WTC11 (cell line): ENCODE measurements at regions of chr16 and their contacts with region 1.

Region 1: DNA sequence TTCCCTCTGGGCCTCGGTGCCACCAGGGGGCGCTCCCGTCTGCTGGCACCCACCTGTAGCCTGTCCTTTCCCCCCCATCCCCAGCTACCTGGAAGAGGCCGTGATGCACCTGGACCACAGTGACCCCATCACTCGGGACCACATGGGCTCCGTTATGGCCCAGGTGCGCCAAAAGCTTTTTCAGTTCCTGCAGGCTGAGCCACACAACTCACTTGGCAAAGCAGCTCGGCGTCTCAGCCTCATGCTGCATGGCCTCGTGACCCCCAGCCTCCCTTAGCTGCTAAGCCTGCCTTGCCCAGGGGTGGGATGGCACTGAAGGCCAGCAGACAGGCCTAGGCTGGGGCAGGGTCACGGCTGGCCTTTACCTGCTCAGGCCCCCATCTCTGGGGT is 818 bp upstream of the NRN1L start:
- DNase-seq: peak; percentile 88
- ATAC-seq: peak; percentile 60
- H3K4me3 Mint-ChIP-seq: no peak overlapping the region
- H3K27ac Mint-ChIP-seq: no peak overlapping the region
- H3K4me1 Mint-ChIP-seq: peaks cover 23% of the 10 kb centered on the region
- H3K27me3 Mint-ChIP-seq: no peaks in the 10 kb centered on the region
- CTCF ChIP-seq: peak; percentile 90

Region 2: GRCh38 chr16:67806428-67807147 is 77.3 kb before region 1 on chr16 and contains the starts of genes RANBP10 and TSNAXIP1:
- CTCF ChIA-PET with region 1: interaction called, 16 read pairs
- POLR2A ChIA-PET with region 1: no interaction called
- DNase-seq: peak; percentile 98
- ATAC-seq: peak; percentile 98
- H3K4me3 Mint-ChIP-seq: peak within 1 kb of the TSS; percentile 92
- H3K27ac Mint-ChIP-seq: peak within 1 kb of the TSS; percentile 92
- H3K4me1 Mint-ChIP-seq: peaks cover 5% of the 10 kb centered on the region
- H3K27me3 Mint-ChIP-seq: no peaks in the 10 kb centered on the region
- CTCF ChIP-seq: no peak
- total RNA-seq, gene RANBP10: 14.0 to 16.9 TPM (median 16.1 TPM) in 3 replicates
- total RNA-seq, gene TSNAXIP1: 0.41 to 1.7 TPM (median 0.48 TPM) in 3 replicates

Region 3: DNA sequence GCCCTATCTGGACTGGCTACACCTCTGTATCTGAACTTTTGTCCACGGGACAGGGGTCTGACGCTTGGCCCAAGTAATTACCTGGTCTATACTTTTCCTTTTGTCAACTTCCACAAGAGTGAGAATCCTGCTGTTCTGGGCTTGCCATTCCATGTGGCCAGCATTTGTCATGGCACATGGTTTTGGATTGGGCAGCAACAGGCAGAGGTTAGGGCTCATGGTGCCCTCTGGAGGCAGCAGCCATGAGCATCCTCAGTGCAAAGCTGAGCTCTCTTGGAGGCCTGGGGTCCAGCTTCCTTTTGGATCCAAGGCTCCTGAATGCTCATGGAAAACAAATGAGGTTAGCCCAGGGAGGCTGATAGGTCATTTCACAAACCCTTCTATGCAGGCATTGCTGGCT is 18.6 kb before region 1 on chr16:
- CTCF ChIA-PET with region 1: interaction called, 19 read pairs
- POLR2A ChIA-PET with region 1: no interaction called
- DNase-seq: peak; percentile 58
- ATAC-seq: peak; percentile 88
- H3K4me3 Mint-ChIP-seq: no peak overlapping the region
- H3K27ac Mint-ChIP-seq: 0 out of 2 replicates have a peak overlapping the region, but pooled peaks have one; percentile 26
- H3K4me1 Mint-ChIP-seq: peaks cover 4% of the 10 kb centered on the region; the same call in 1 of the 2 replicates
- H3K27me3 Mint-ChIP-seq: no peaks in the 10 kb centered on the region
- CTCF ChIP-seq: no peak

Region 4: GRCh38 chr16:67919622-67920221 is 35.9 kb after region 1 on chr16:
- CTCF ChIA-PET with region 1: interaction called, 144 read pairs
- POLR2A ChIA-PET with region 1: interaction called, 4 read pairs
- DNase-seq: no peak
- ATAC-seq: peak; percentile 8; the same call in 1 of the 2 replicates
- H3K4me3 Mint-ChIP-seq: no peak overlapping the region
- H3K27ac Mint-ChIP-seq: no peak overlapping the region
- H3K4me1 Mint-ChIP-seq: peaks cover 36% of the 10 kb centered on the region
- H3K27me3 Mint-ChIP-seq: no peaks in the 10 kb centered on the region; the same call in 1 of the 2 replicates
- CTCF ChIP-seq: no peak

Region 5: GRCh38 chr16:67942200-67942509 is 58.3 kb after region 1 on chr16:
- CTCF ChIA-PET with region 1: interaction called, 61 read pairs
- POLR2A ChIA-PET with region 1: interaction called, 30 read pairs
- DNase-seq: peak; percentile 78
- ATAC-seq: peak; percentile 83
- H3K4me3 Mint-ChIP-seq: no peak overlapping the region
- H3K27ac Mint-ChIP-seq: no peak overlapping the region
- H3K4me1 Mint-ChIP-seq: peaks cover 7% of the 10 kb centered on the region
- H3K27me3 Mint-ChIP-seq: no peaks in the 10 kb centered on the region
- CTCF ChIP-seq: peak; percentile 63